ENCODE measurements at regions of chr19 and their contacts with region 1.

Region 1: GRCh38 chr19:17475541-17476115 is 5.3 kb downstream of the SLC27A1 start:
- DNase-seq: no peak
- H3K4me3 ChIP-seq: no peak overlapping the region
- H3K4me3 Mint-ChIP-seq: no peak overlapping the region
- H3K27ac ChIP-seq: no peak overlapping the region
- H3K27ac Mint-ChIP-seq: peak overlapping the region in 2 of 8 donors; percentile 23 to 75
- H3K4me1 ChIP-seq: peaks cover 8% of the 10 kb centered on the region
- H3K4me1 Mint-ChIP-seq: peaks cover 5 to 16% (median 13%) of the 10 kb centered on the region in 3 donors
- H3K27me3 ChIP-seq: no peaks in the 10 kb centered on the region
- H3K27me3 Mint-ChIP-seq: no peaks in the 10 kb centered on the region

Region 2: GRCh38 chr19:17390665-17391370 is 84.8 kb before region 1 on chr19:
- CTCF ChIA-PET with region 1: no interaction called
- POLR2A ChIA-PET with region 1: no interaction called
- DNase-seq: peak; percentile 81 to 88 (median 86)
- H3K4me3 ChIP-seq: peak overlapping the region; percentile 64
- H3K4me3 Mint-ChIP-seq: peak overlapping the region; percentile 76 to 94 (median 89)
- H3K27ac ChIP-seq: no peak overlapping the region
- H3K27ac Mint-ChIP-seq: peak overlapping the region in 3 of 8 donors; percentile 48 to 86 (median 61)
- H3K4me1 ChIP-seq: peaks cover 20% of the 10 kb centered on the region
- H3K4me1 Mint-ChIP-seq: peaks cover 15 to 29% (median 20%) of the 10 kb centered on the region in 3 donors
- H3K27me3 ChIP-seq: no peaks in the 10 kb centered on the region
- H3K27me3 Mint-ChIP-seq: peaks cover 0 to 2% of the 10 kb centered on the region in 2 donors

Region 3: GRCh38 chr19:17448131-17448967 is 27.3 kb before region 1 on chr19 and contains the start of gene TMEM221:
- CTCF ChIA-PET with region 1: no interaction called
- POLR2A ChIA-PET with region 1: no interaction called
- DNase-seq: peak; percentile 28 to 67 (median 41)
- H3K4me3 ChIP-seq: no peak within 1 kb of the TSS
- H3K4me3 Mint-ChIP-seq: peak within 1 kb of the TSS in 6 of 7 donors; percentile 26 to 80 (median 44)
- H3K27ac ChIP-seq: no peak within 1 kb of the TSS
- H3K27ac Mint-ChIP-seq: no peak within 1 kb of the TSS
- H3K4me1 ChIP-seq: peaks cover 5% of the 10 kb centered on the region
- H3K4me1 Mint-ChIP-seq: peaks cover 7 to 11% (median 8%) of the 10 kb centered on the region in 3 donors
- H3K27me3 ChIP-seq: peaks cover 9% of the 10 kb centered on the region
- H3K27me3 Mint-ChIP-seq: peaks cover 22 to 30% of the 10 kb centered on the region in 2 donors
- total RNA-seq, gene TMEM221: not detected

Region 4: DNA sequence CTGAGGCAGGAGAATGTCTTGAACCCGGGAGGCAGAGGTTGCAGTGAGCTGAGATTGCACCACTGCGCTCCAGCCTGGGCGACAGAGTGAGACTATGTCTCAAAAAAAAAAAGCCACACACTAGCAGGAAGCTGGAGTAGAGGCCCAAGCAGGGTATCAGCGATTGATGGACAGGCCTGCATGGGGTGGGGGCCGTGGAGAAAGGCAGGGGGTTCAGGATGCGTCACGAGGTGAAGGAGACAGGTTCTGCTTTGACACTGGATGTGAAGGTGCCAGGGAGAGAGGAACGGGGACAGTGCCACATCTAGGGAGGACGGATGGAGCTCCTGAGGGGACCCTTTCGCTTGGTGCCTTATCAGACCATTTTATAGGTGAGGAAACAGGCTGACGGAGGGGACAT is 86.9 kb after region 1 on chr19:
- CTCF ChIA-PET with region 1: no interaction called
- POLR2A ChIA-PET with region 1: interaction called, 10 read pairs
- DNase-seq: no peak
- H3K4me3 ChIP-seq: no peak overlapping the region
- H3K4me3 Mint-ChIP-seq: peak overlapping the region in 1 of 7 donors; percentile 24
- H3K27ac ChIP-seq: no peak overlapping the region
- H3K27ac Mint-ChIP-seq: peak overlapping the region in 1 of 8 donors; percentile 78
- H3K4me1 ChIP-seq: no peaks in the 10 kb centered on the region
- H3K4me1 Mint-ChIP-seq: peaks cover 0 to 10% (median 5%) of the 10 kb centered on the region in 3 donors
- H3K27me3 ChIP-seq: no peaks in the 10 kb centered on the region
- H3K27me3 Mint-ChIP-seq: no peaks in the 10 kb centered on the region

Measured in CD8-positive, alpha-beta memory T cell (primary cell).